K562 (cell line): ENCODE measurements at regions of chr6 and their contacts with region 1.

Region 1: DNA sequence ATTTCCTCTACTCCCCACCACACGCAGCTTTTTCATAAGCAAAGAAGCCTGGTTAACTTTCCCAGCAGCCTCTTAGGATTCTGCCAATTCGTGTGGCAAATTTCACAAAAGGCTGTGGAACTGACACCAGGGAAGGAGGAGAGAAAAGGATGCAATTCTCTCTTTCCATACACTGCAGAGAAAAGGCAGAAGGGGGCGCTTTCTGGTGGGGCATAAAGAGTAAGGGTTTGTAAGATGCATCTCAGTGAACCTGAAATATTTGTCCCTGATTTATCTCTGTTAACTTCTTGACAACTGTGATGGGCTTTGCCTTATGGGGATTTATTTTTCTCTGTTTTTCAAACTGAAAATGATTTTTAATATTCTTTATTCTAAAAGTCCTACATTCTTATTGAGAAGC is 45.5 kb upstream of the GLP1R start:
- DNase-seq: peak; percentile 28 to 67 (median 46)
- ATAC-seq: peak; percentile 71
- H3K4me3 ChIP-seq: no peak overlapping the region
- H3K27ac ChIP-seq: no peak overlapping the region
- H3K4me1 ChIP-seq: peaks cover 6 to 16% of the 10 kb centered on the region in 2 experiments
- H3K27me3 ChIP-seq: peaks cover 19 to 23% of the 10 kb centered on the region in 2 experiments
- CTCF ChIP-seq: peak; percentile 73 to 78 (median 76)
- EP300 ChIP-seq: no peak
- POLR2A ChIP-seq: no peak
- RAD21 ChIP-seq: peak; percentile 62 to 90

Region 2: DNA sequence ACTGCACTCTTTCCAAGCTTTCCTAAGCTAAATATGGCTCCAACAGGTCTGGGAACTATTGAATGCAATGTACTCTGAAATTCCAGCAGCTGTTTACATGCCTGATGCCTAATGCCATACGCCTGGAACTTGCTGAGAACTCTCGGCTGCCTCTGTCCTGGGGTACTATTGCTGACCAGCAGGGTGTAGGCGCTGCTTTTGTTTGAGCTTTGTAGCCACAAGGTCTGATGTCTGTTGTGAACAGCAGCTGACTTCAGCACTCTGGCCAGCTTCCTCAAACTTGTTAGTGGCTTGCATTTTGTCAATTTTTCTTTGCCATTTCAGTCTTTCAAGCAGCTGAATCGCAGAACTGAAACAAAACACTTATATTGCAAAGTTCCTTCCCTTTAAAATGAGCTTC is 85.3 kb after region 1 on chr6:
- CTCF ChIA-PET with region 1: interaction called, 5 read pairs
- POLR2A ChIA-PET with region 1: interaction called, 3 read pairs
- in situ Hi-C with region 1: no loop called
- intact Hi-C with region 1: loop called (anchors 2 kb)
- DNase-seq: peak; percentile 33 to 55 (median 47)
- ATAC-seq: peak; percentile 92
- H3K4me3 ChIP-seq: no peak overlapping the region
- H3K27ac ChIP-seq: no peak overlapping the region
- H3K4me1 ChIP-seq: no peaks in the 10 kb centered on the region; a peak in 1 of 5 replicates
- H3K27me3 ChIP-seq: peaks cover 39 to 77% of the 10 kb centered on the region in 2 experiments
- CTCF ChIP-seq: peak; percentile 38 to 67 (median 52); a peak in 5 of 6 replicates
- EP300 ChIP-seq: no peak
- POLR2A ChIP-seq: no peak
- RAD21 ChIP-seq: peak; percentile 34 to 59; a peak in 3 of 4 replicates

Region 3: GRCh38 chr6:39327507-39327906 is 324.4 kb after region 1 on chr6:
- CTCF ChIA-PET with region 1: no interaction called
- POLR2A ChIA-PET with region 1: no interaction called
- in situ Hi-C with region 1: no loop called
- intact Hi-C with region 1: no loop called
- DNase-seq: no peak
- ATAC-seq: no peak
- H3K4me3 ChIP-seq: no peak overlapping the region
- H3K27ac ChIP-seq: no peak overlapping the region
- H3K4me1 ChIP-seq: no peaks in the 10 kb centered on the region
- H3K27me3 ChIP-seq: peaks cover 24 to 55% of the 10 kb centered on the region in 2 experiments; a peak in 4 of 5 replicates
- CTCF ChIP-seq: no peak
- EP300 ChIP-seq: no peak
- POLR2A ChIP-seq: no peak
- RAD21 ChIP-seq: no peak